ENCODE measurements at regions of chr5 and their contacts with region 1.

Region 1: DNA sequence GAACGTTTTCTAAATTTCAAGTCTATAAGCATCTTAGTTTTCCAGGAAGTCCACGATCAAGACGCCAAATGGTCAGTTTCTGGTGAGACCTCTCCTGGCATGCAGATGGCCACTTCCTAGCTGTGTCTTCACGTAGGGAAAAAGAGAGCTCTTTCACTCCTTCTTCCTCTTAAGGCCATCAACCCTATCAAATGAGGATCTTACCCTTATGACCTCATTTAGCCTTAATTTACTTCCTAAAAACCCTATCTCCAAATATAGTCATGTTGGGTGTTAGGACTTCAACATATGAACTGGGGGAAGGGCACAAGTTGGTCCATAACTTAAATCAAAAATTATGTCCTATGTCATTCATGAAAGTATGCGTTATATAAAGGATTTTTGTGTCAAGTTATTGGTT is 229.5 kb downstream of the ARL15 start:
- DNase-seq: no peak
- ATAC-seq: no peak

Region 2: DNA sequence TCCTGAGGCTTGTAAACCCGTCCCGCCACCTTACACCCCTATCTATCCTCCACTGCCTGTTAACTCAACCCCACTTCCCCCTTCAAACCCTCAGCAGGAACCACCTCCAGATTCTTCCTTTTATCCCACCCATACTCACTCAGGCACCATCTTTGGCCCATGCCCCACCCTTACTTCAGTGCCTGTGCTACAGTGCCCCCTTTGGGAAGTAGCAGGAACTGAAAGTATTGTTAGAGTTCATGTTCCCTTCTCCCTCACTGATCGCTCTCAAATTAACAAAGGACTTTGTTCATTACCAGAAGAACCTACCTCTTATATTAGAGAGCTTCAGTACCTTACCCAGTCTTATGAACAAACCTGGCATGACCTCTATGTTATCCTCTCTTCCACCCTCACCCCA is 879.1 kb before region 1 on chr5:
- intact Hi-C with region 1: no loop called
- DNase-seq: no peak
- ATAC-seq: no peak

Region 3: GRCh38 chr5:54062958-54063357 is 17.9 kb before region 1 on chr5:
- intact Hi-C with region 1: loop called (anchors 1 kb)
- DNase-seq: no peak
- ATAC-seq: no peak

Region 4: GRCh38 chr5:54224103-54224826 is 143.4 kb after region 1 on chr5:
- intact Hi-C with region 1: no loop called
- DNase-seq: no peak
- ATAC-seq: no peak

Measured in sciatic nerve (tissue), 2 donors.